IMR-90 (cell line): ENCODE measurements at regions of chr2 and their contacts with region 1.

Region 1: GRCh38 chr2:186879312-186879711 is 30.3 kb upstream of the ZSWIM2 start:
- DNase-seq: no peak
- ATAC-seq: no peak
- H3K4me3 ChIP-seq: no peak overlapping the region
- H3K27ac ChIP-seq: no peak overlapping the region
- H3K4me1 ChIP-seq: no peaks in the 10 kb centered on the region
- H3K27me3 ChIP-seq: no peaks in the 10 kb centered on the region
- CTCF ChIP-seq: no peak
- POLR2A ChIP-seq: no peak
- RAD21 ChIP-seq: no peak

Region 2: GRCh38 chr2:187299122-187299906 is 420.0 kb after region 1 on chr2:
- CTCF ChIA-PET with region 1: no interaction called
- POLR2A ChIA-PET with region 1: no interaction called
- dilution Hi-C with region 1: no loop called
- in situ Hi-C with region 1: no loop called
- intact Hi-C with region 1: loop called (anchors 10 kb)
- DNase-seq: no peak
- ATAC-seq: no peak; the same call in 1 of the 2 replicates
- H3K4me3 ChIP-seq: no peak overlapping the region
- H3K27ac ChIP-seq: no peak overlapping the region
- H3K4me1 ChIP-seq: no peaks in the 10 kb centered on the region
- H3K27me3 ChIP-seq: no peaks in the 10 kb centered on the region
- CTCF ChIP-seq: peak; percentile 27; the same call in 1 of the 2 replicates
- POLR2A ChIP-seq: no peak
- RAD21 ChIP-seq: peak; percentile 26; the same call in 1 of the 2 replicates

Region 3: DNA sequence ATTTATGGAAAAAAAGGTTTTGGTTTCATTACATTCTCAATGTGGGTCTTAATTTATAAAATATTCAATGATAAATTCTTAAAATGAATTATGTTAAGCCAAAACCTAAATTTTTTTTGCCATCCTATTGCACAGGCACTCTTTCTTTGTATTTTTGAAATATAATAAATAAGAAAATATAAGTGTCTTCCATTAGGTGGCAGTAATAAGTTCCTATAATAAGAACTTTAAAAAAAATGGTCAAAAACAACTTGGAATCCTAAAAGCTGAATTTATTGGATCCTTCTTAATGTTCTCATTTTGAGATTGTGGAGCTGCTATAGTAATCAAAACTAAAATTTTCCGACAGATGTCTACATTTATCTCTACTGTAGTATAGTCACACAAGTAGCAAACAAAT is 563.1 kb after region 1 on chr2:
- CTCF ChIA-PET with region 1: no interaction called
- POLR2A ChIA-PET with region 1: no interaction called
- dilution Hi-C with region 1: no loop called
- in situ Hi-C with region 1: loop called (anchors 10 kb)
- intact Hi-C with region 1: no loop called
- DNase-seq: no peak
- ATAC-seq: peak; percentile 40; the same call in 1 of the 2 replicates
- H3K4me3 ChIP-seq: no peak overlapping the region
- H3K27ac ChIP-seq: no peak overlapping the region
- H3K4me1 ChIP-seq: no peaks in the 10 kb centered on the region
- H3K27me3 ChIP-seq: no peaks in the 10 kb centered on the region
- CTCF ChIP-seq: peak; percentile 26; the same call in 1 of the 2 replicates
- POLR2A ChIP-seq: no peak
- RAD21 ChIP-seq: no peak

Region 4: GRCh38 chr2:188158337-188159100 is 1279.2 kb after region 1 on chr2:
- CTCF ChIA-PET with region 1: no interaction called
- POLR2A ChIA-PET with region 1: no interaction called
- dilution Hi-C with region 1: no loop called
- in situ Hi-C with region 1: no loop called
- intact Hi-C with region 1: loop called (anchors 5 kb)
- DNase-seq: peak; percentile 40
- ATAC-seq: peak; percentile 35
- H3K4me3 ChIP-seq: no peak overlapping the region
- H3K27ac ChIP-seq: no peak overlapping the region
- H3K4me1 ChIP-seq: peaks cover 2% of the 10 kb centered on the region; the same call in 1 of the 2 replicates
- H3K27me3 ChIP-seq: no peaks in the 10 kb centered on the region
- CTCF ChIP-seq: no peak
- POLR2A ChIP-seq: no peak
- RAD21 ChIP-seq: no peak